ENCODE measurements at regions of chr20 and their contacts with region 1.

Region 1: GRCh38 chr20:53915446-53916172 is 154.8 kb downstream of the BCAS1 start:
- DNase-seq: peak; percentile 64 to 97 (median 92)
- H3K4me3 ChIP-seq: peak overlapping the region; percentile 50 to 94 (median 73)
- H3K27ac ChIP-seq: peak overlapping the region; percentile 58 to 97 (median 91)
- H3K27me3 ChIP-seq: no peaks in the 10 kb centered on the region
- CTCF ChIP-seq: peak; percentile 80 to 96 (median 88)

Region 2: DNA sequence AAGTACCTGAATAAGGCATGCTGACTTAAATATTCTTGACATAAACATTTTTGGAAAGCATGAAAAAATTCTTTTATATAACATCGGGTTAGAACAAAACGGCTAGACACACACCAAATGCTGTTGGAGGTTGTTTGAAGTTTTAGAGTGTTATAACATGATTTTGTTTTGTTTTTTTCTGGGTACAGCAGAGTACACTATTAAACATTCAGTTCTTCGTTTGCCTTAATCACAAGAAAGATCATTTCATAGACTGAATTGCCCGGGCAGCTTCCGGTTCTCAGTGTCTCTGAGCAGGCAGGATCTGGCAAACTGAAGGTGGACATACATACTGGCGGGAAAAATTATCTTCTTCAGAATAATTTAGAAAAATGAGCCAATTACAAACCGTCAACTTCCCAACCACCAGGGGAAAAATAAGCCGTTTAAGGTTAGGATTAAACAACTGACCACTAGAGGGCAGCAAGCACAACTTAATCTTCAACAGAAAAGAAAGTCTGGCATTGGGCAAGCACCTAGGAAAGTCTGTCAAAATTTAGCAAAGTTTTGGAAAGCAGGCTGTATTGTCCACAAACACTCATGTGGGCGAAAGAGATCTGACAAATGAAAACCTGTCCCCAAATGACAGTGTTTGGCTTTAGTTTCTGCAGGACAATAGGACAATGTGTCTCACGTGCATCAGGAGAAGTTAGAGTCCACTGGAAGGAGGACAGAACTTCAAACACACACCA is 337.0 kb before region 1 on chr20:
- intact Hi-C with region 1: loop called (anchors 2 to 5 kb)
- DNase-seq: peak in 2 of 10 donors; percentile 39 to 48
- H3K4me3 ChIP-seq: peak overlapping the region in 30 of 59 donors; percentile 0 to 40 (median 20)
- H3K27ac ChIP-seq: peak overlapping the region in 33 of 59 donors; percentile 5 to 78 (median 42)
- H3K27me3 ChIP-seq: no peaks in the 10 kb centered on the region
- CTCF ChIP-seq: peak; percentile 88 to 99 (median 96)

Region 3: DNA sequence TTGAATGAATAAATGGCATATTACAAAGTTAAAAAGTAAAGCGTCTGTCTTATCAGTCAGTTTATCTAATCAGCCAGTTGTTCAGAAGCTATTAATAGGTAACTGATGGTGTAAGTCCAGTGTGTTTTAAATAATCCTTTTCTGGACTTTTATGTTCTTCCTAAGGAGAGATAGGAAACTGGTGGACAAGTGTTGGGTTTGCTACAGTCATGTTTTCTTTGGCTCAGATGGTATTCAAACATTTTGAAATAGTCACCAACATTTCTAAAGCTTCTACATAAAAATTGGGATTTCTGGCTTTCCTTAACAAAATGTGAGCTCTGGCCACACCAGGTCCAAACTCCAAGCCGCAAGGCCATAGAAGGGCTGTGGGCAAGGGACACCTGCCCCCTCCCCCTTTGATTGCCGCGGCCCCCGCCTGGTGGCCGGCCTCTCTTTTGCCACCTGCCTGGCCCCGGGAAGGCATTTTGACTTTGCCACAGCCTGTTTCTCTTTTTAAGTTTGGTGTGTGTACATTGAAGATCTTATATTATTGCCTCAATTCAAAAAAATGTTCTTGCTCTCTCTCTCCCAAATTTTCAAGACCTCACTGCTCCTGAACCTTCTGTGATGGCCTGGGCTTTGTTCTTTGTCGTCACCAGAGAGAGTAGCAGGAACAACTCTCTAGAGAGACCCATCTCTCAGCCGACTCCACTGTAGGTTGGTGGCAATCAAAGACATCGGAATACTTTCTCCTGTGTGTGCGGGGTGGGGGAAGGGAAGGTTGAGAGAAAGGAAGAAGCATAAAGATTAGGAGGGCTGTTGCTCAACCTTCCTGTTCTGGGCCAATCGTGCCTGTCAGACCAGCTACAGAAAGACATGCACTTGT is 237.9 kb before region 1 on chr20:
- intact Hi-C with region 1: loop called in 1 of 2 experiments (anchors 10 kb)
- DNase-seq: no peak
- H3K4me3 ChIP-seq: no peak overlapping the region
- H3K27ac ChIP-seq: peak overlapping the region in 50 of 59 donors; percentile 21 to 92 (median 83)
- H3K27me3 ChIP-seq: no peaks in the 10 kb centered on the region
- CTCF ChIP-seq: no peak

Region 4: GRCh38 chr20:53773792-53774401 is 141.7 kb before region 1 on chr20:
- intact Hi-C with region 1: no loop called
- DNase-seq: no peak
- H3K4me3 ChIP-seq: no peak overlapping the region
- H3K27ac ChIP-seq: no peak overlapping the region
- H3K27me3 ChIP-seq: no peaks in the 10 kb centered on the region
- CTCF ChIP-seq: no peak

Region 5: GRCh38 chr20:53899351-53900167 is 16.1 kb before region 1 on chr20:
- intact Hi-C with region 1: no loop called
- DNase-seq: no peak
- H3K4me3 ChIP-seq: no peak overlapping the region
- H3K27ac ChIP-seq: no peak overlapping the region
- H3K27me3 ChIP-seq: no peaks in the 10 kb centered on the region
- CTCF ChIP-seq: no peak

Region 6: GRCh38 chr20:53939572-53940359 is 24.2 kb after region 1 on chr20:
- intact Hi-C with region 1: loop called in 1 of 2 experiments (anchors 1 kb)
- DNase-seq: peak; percentile 15 to 91 (median 82)
- H3K4me3 ChIP-seq: peak overlapping the region in 49 of 59 donors; percentile 1 to 60 (median 34)
- H3K27ac ChIP-seq: peak overlapping the region in 56 of 59 donors; percentile 37 to 86 (median 70)
- H3K27me3 ChIP-seq: no peaks in the 10 kb centered on the region
- CTCF ChIP-seq: peak; percentile 40 to 84 (median 72)

Region 7: DNA sequence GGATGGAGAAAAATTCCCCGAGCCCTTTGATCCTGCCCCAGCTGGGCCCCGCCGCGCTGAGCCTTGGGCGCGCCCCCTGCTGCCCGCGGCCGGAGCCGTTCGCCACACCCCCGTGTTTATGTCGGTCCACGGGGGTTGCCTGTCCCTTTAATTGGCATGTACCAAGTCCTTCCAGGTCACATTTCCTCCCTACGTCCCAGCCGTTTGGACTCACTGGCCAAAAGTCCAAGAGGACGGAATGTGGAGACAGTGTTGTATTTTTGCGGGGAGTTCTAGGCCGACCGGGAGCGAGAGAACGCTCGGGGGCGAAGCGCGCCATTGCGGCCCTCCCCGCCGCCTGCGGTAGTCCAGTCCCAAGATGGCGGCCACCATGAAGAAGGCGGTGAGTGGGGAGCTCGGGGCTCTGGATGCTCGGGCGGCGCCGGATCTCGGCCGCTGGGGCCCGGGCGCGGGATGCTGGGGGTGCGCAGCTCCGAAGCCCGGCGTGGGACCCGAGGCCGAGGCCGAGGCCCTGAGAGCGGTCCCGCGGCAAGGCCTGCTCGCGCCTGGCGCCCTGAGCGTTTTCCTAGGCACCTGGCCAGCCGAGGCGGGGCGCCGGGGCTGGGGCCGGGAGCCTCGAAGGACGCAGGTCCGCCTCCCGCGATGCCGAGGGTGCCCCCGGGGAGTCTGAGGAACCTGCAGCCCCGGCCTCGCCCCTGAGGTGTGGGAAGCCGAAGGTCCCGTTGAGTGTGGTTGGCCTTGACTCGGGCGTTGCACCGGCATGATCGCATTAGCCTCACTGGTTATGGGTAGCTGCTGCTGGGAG is 292.3 kb after region 1 on chr20 and contains the start of gene PFDN4:
- intact Hi-C with region 1: loop called in 1 of 2 experiments (anchors 5 kb)
- DNase-seq: peak; percentile 70 to 87 (median 78)
- H3K4me3 ChIP-seq: peak within 1 kb of the TSS; percentile 56 to 99 (median 93)
- H3K27ac ChIP-seq: peak within 1 kb of the TSS; percentile 92 to 100 (median 99)
- H3K27me3 ChIP-seq: no peaks in the 10 kb centered on the region
- CTCF ChIP-seq: peak; percentile 46 to 94 (median 85)
- total RNA-seq, gene PFDN4: 12.0 to 56.7 (median 33.2) TPM

Measured in dorsolateral prefrontal cortex (tissue), 120 donors.